CD8-positive, alpha-beta T cell (primary cell): ENCODE measurements at regions of chr1 and their contacts with region 1.

Region 1: DNA sequence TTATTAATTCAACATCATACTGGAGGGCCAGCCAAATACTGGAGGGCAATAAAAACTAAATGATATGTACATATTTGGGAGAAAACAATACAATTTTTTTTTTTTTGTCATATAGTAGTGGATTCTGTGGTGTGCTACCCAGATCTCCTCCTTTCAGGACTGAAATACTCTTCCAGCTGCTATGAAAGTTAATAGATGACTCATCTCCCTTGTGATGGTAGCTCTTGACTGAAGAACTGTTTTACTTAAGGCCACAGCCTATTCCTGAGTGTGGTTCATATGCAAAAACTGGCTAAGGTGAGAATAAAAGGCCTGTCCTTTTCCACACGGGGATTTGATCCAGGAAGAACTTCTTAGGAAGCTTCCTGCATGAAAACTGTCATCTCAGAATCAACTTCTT is 307.9 kb downstream of the HLX start:
- DNase-seq: no peak
- ATAC-seq: no peak
- H3K4me3 ChIP-seq: no peak overlapping the region
- H3K4me3 Mint-ChIP-seq: no peak overlapping the region
- H3K27ac ChIP-seq: no peak overlapping the region
- H3K27ac Mint-ChIP-seq: no peak overlapping the region
- H3K4me1 ChIP-seq: no peaks in the 10 kb centered on the region
- H3K4me1 Mint-ChIP-seq: no peaks in the 10 kb centered on the region
- H3K27me3 ChIP-seq: no peaks in the 10 kb centered on the region
- H3K27me3 Mint-ChIP-seq: peaks cover 3% of the 10 kb centered on the region
- CTCF ChIP-seq: no peak

Region 2: DNA sequence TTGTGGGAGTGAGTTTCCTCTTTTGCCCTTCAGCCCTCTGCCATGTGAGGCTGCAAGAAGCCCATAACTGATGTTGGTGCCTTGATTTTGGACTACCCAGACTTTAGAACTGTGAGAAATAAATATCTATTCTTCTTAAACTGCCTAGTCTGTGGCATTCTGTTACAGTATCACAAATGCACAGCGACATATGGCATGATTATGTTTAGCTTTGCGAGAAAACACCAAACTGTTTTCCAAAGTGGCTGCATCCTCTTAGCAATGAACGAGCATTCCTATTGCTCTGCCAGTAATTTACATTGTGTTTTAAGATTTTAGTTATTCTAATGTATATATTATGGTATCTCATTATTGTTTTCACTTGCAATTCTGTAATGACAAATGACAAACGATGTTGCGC is 61.2 kb before region 1 on chr1:
- CTCF ChIA-PET with region 1: no interaction called
- POLR2A ChIA-PET with region 1: no interaction called
- intact Hi-C with region 1: no loop called
- DNase-seq: no peak
- ATAC-seq: no peak
- H3K4me3 ChIP-seq: no peak overlapping the region
- H3K4me3 Mint-ChIP-seq: no peak overlapping the region
- H3K27ac ChIP-seq: no peak overlapping the region
- H3K27ac Mint-ChIP-seq: no peak overlapping the region
- H3K4me1 ChIP-seq: no peaks in the 10 kb centered on the region
- H3K4me1 Mint-ChIP-seq: no peaks in the 10 kb centered on the region
- H3K27me3 ChIP-seq: no peaks in the 10 kb centered on the region
- H3K27me3 Mint-ChIP-seq: no peaks in the 10 kb centered on the region
- CTCF ChIP-seq: no peak

Region 3: DNA sequence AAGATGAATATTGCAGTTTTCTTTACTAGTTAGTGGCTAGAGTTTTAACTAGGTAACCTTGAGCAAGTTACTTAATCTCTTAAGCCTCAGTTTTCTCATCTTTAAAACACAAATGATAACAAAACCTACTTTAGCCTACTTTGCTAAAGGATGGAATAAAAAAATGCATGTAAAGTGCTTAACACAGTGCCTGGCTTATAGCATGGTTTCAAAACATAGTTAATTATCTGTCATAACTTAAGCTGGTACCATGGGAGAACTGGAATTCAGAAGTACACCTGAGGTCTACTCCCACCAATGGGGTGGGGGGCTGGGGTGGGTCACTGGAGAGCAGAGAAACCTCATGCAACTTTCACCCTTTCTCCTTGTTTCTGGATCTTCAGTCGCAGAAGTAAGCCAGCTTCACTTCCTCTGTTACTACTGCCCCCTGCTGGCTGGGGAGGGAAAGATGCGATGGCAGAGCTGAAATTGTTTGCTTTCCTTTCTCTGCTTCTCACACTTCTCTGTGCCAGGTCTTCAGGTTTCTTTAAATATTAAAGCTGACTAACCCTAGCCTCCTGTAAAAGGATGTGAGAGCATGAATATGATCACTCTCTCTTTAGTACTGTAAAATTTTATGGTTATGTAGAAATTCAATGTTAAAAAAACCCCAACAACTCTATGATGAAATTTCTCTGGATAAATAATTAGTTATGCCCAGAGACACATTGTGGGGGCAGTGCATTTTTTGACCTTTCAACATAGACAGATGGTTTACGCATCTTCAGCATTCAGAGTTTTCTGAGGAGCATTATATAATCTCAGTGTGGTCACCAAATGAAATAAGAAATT is 16.3 kb after region 1 on chr1:
- CTCF ChIA-PET with region 1: interaction called, 10 read pairs
- POLR2A ChIA-PET with region 1: no interaction called
- intact Hi-C with region 1: no loop called
- DNase-seq: peak; percentile 10 to 68 (median 54)
- ATAC-seq: no peak
- H3K4me3 ChIP-seq: no peak overlapping the region
- H3K4me3 Mint-ChIP-seq: no peak overlapping the region
- H3K27ac ChIP-seq: no peak overlapping the region
- H3K27ac Mint-ChIP-seq: no peak overlapping the region
- H3K4me1 ChIP-seq: no peaks in the 10 kb centered on the region
- H3K4me1 Mint-ChIP-seq: no peaks in the 10 kb centered on the region
- H3K27me3 ChIP-seq: no peaks in the 10 kb centered on the region
- H3K27me3 Mint-ChIP-seq: peaks cover 6% of the 10 kb centered on the region
- CTCF ChIP-seq: peak; percentile 66

Region 4: DNA sequence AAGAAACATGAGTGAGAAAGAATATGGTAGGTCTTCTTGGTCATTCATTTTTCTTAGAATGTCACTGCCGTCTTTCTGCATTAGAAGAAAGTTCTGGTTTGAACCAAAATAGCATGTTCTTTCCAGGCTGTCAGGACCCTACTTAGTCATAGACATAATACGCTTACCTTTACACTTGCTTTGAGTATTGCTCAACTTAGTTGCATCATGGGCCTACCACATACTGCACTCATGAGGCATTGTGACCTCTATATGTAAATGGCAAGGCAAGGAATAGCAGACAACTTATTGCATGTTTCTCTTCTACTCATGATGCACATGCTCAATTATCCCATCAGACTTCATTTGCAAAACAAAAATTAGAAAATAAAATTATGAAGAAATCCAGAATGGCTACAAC is 107.1 kb after region 1 on chr1:
- CTCF ChIA-PET with region 1: no interaction called
- POLR2A ChIA-PET with region 1: no interaction called
- intact Hi-C with region 1: no loop called
- DNase-seq: no peak
- ATAC-seq: no peak
- H3K4me3 ChIP-seq: no peak overlapping the region
- H3K4me3 Mint-ChIP-seq: no peak overlapping the region
- H3K27ac ChIP-seq: no peak overlapping the region
- H3K27ac Mint-ChIP-seq: no peak overlapping the region
- H3K4me1 ChIP-seq: no peaks in the 10 kb centered on the region
- H3K4me1 Mint-ChIP-seq: no peaks in the 10 kb centered on the region
- H3K27me3 ChIP-seq: no peaks in the 10 kb centered on the region
- H3K27me3 Mint-ChIP-seq: no peaks in the 10 kb centered on the region
- CTCF ChIP-seq: no peak